Activated CD4-positive, alpha-beta T cell treated with anti-CD3 and anti-CD28 coated beads, Interleukin-2, amount 10 ng/mL, durations not matched to agents 24 days and 14 days (primary cell): ENCODE measurements at regions of chr4 and their contacts with region 1.

Region 1: DNA sequence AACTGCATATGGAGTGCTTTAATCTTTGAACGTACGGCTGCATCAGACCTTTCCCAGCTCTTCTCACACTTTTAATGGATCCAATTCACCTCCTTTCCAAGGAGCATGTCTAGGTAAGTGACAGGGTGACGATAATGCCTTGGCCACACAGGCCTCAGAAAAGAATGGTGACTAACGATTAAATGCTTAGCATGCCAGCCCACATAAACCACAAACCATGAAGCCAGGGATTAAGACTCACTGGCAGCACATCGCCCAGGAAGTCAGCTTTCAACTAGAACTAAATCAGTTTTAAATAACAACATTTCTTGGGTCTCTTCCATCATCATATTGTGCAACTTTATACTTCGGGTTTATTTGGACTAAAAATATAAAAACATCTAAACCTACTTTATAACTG is 28.7 kb downstream of the INPP4B start:
- DNase-seq: peak; percentile 77
- H3K4me3 Mint-ChIP-seq: peak overlapping the region; percentile 25
- H3K27ac Mint-ChIP-seq: peak overlapping the region; percentile 78
- H3K4me1 Mint-ChIP-seq: peaks cover 21% of the 10 kb centered on the region
- H3K27me3 Mint-ChIP-seq: no peaks in the 10 kb centered on the region

Region 2: GRCh38 chr4:142696334-142697122 is 120.9 kb before region 1 on chr4:
- intact Hi-C with region 1: loop called (anchors 5 kb)
- DNase-seq: peak; percentile 71
- H3K4me3 Mint-ChIP-seq: peak overlapping the region; percentile 26
- H3K27ac Mint-ChIP-seq: peak overlapping the region; percentile 79
- H3K4me1 Mint-ChIP-seq: peaks cover 48% of the 10 kb centered on the region
- H3K27me3 Mint-ChIP-seq: no peaks in the 10 kb centered on the region